CD8-positive, alpha-beta T cell (primary cell): ENCODE measurements at regions of chr3 and their contacts with region 1.

Region 1: GRCh38 chr3:9932843-9933560 is 632 bp upstream of the CRELD1 start:
- DNase-seq: peak; percentile 77 to 94 (median 87)
- ATAC-seq: peak; percentile 59
- H3K4me3 ChIP-seq: peak overlapping the region; percentile 85 to 95
- H3K4me3 Mint-ChIP-seq: peak overlapping the region; percentile 95
- H3K27ac ChIP-seq: peak overlapping the region; percentile 90 to 100
- H3K27ac Mint-ChIP-seq: peak overlapping the region; percentile 99
- H3K4me1 ChIP-seq: peaks cover 32% of the 10 kb centered on the region
- H3K4me1 Mint-ChIP-seq: peaks cover 47% of the 10 kb centered on the region
- H3K27me3 ChIP-seq: no peaks in the 10 kb centered on the region
- H3K27me3 Mint-ChIP-seq: no peaks in the 10 kb centered on the region
- CTCF ChIP-seq: peak; percentile 79

Region 2: GRCh38 chr3:9362731-9363530 is 570.1 kb before region 1 on chr3 and contains the start of gene THUMPD3:
- CTCF ChIA-PET with region 1: no interaction called
- POLR2A ChIA-PET with region 1: interaction called, 5 read pairs
- intact Hi-C with region 1: loop called in 1 of 2 experiments (anchors 5 kb)
- DNase-seq: peak; percentile 82 to 94 (median 92)
- ATAC-seq: peak; percentile 92
- H3K4me3 ChIP-seq: peak within 1 kb of the TSS; percentile 79 to 97
- H3K4me3 Mint-ChIP-seq: peak within 1 kb of the TSS; percentile 96
- H3K27ac ChIP-seq: peak within 1 kb of the TSS; percentile 93 to 97
- H3K27ac Mint-ChIP-seq: peak within 1 kb of the TSS; percentile 99
- H3K4me1 ChIP-seq: peaks cover 19% of the 10 kb centered on the region
- H3K4me1 Mint-ChIP-seq: peaks cover 35% of the 10 kb centered on the region
- H3K27me3 ChIP-seq: no peaks in the 10 kb centered on the region
- H3K27me3 Mint-ChIP-seq: no peaks in the 10 kb centered on the region
- CTCF ChIP-seq: no peak
- total RNA-seq, gene THUMPD3: 84.1 to 84.3 TPM

Region 3: DNA sequence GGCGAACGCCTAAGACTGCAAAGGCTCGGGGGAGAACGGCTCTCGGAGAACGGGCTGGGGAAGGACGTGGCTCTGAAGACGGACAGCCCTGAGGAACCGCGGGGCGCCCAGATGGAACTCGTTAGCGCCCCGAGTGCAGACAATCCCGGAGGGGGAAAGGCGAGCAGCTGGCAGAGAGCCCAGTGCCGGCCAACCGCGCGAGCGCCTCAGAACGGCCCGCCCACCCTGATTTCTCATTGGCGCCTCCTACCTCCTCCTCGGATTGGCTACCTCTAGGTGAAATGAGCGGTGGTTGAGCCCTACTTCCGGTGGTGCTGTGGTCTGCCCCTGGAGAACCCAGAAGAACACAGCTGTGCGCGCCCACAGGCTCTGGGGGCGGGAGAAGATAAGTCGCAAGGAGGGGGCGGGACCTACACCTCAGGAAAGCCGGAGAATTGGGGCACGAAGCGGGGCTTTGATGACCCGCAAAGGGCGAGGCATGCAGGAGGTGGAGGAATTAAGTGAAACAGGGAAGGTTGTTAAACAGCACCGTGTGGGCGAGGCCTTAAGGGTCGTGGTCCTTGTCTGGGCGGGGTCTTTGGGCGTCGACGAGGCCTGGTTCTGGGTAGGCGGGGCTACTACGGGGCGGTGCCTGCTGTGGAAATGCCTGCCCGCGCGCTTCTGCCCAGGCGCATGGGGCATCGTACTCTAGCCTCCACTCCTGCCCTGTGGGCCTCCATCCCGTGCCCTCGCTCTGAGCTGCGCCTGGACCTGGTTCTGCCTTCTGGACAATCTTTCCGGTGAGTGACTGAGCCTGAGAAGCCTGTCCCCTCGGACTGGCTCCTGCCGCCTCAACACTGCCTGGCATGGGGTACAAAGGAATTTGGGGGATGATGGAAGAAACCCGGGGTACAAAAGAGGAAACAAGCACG is 183.1 kb before region 1 on chr3 and contains the start of gene OGG1:
- CTCF ChIA-PET with region 1: no interaction called
- POLR2A ChIA-PET with region 1: interaction called, 6 read pairs
- intact Hi-C with region 1: loop called in 1 of 2 experiments (anchors 5 kb)
- DNase-seq: peak; percentile 84 to 98 (median 95)
- ATAC-seq: peak; percentile 93
- H3K4me3 ChIP-seq: peak within 1 kb of the TSS; percentile 79 to 94
- H3K4me3 Mint-ChIP-seq: peak within 1 kb of the TSS; percentile 96
- H3K27ac ChIP-seq: peak within 1 kb of the TSS; percentile 50 to 52
- H3K27ac Mint-ChIP-seq: peak within 1 kb of the TSS; percentile 93
- H3K4me1 ChIP-seq: peaks cover 35% of the 10 kb centered on the region
- H3K4me1 Mint-ChIP-seq: peaks cover 44% of the 10 kb centered on the region
- H3K27me3 ChIP-seq: no peaks in the 10 kb centered on the region
- H3K27me3 Mint-ChIP-seq: no peaks in the 10 kb centered on the region
- CTCF ChIP-seq: no peak
- total RNA-seq, gene OGG1: 4.9 to 7.9 TPM

Region 4: GRCh38 chr3:9866639-9867038 is 66.4 kb before region 1 on chr3:
- CTCF ChIA-PET with region 1: no interaction called
- POLR2A ChIA-PET with region 1: no interaction called
- intact Hi-C with region 1: no loop called
- DNase-seq: no peak
- ATAC-seq: no peak
- H3K4me3 ChIP-seq: no peak overlapping the region
- H3K4me3 Mint-ChIP-seq: no peak overlapping the region
- H3K27ac ChIP-seq: no peak overlapping the region
- H3K27ac Mint-ChIP-seq: no peak overlapping the region
- H3K4me1 ChIP-seq: no peaks in the 10 kb centered on the region
- H3K4me1 Mint-ChIP-seq: peaks cover 4% of the 10 kb centered on the region
- H3K27me3 ChIP-seq: peaks cover 0 to 8% of the 10 kb centered on the region in 2 experiments
- H3K27me3 Mint-ChIP-seq: peaks cover 10% of the 10 kb centered on the region
- CTCF ChIP-seq: no peak

Region 5: DNA sequence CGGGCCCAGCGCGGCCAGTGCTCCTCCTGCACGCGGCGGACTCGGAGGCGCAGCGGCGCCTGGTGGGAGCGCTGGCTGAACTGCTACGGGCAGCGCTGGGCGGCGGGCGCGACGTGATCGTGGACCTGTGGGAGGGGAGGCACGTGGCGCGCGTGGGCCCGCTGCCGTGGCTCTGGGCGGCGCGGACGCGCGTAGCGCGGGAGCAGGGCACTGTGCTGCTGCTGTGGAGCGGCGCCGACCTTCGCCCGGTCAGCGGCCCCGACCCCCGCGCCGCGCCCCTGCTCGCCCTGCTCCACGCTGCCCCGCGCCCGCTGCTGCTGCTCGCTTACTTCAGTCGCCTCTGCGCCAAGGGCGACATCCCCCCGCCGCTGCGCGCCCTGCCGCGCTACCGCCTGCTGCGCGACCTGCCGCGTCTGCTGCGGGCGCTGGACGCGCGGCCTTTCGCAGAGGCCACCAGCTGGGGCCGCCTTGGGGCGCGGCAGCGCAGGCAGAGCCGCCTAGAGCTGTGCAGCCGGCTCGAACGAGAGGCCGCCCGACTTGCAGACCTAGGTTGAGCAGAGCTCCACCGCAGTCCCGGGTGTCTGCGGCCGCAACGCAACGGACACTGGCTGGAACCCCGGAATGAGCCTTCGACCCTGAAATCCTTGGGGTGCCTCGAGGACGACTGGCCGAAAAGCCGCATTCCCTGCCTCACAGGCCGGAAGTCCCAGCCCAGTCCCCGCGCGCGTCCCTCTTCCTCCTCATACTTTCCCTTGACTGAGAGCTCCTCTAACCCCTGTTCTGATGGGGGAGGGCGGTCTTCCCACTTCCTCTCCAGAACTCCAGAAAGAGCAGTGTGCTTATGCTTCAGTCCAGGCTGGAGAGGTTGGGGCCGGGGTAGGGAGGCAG is 17.5 kb before region 1 on chr3:
- CTCF ChIA-PET with region 1: interaction called, 13 read pairs
- POLR2A ChIA-PET with region 1: interaction called, 16 read pairs
- intact Hi-C with region 1: loop called in 1 of 2 experiments (anchors 2 kb)
- DNase-seq: peak in 3 of 9 experiments; percentile 36 to 55 (median 53)
- ATAC-seq: peak; percentile 45
- H3K4me3 ChIP-seq: peak overlapping the region; percentile 54 to 56
- H3K4me3 Mint-ChIP-seq: peak overlapping the region; percentile 81
- H3K27ac ChIP-seq: no peak overlapping the region
- H3K27ac Mint-ChIP-seq: no peak overlapping the region
- H3K4me1 ChIP-seq: peaks cover 13% of the 10 kb centered on the region
- H3K4me1 Mint-ChIP-seq: peaks cover 16% of the 10 kb centered on the region
- H3K27me3 ChIP-seq: no peaks in the 10 kb centered on the region
- H3K27me3 Mint-ChIP-seq: peaks cover 16% of the 10 kb centered on the region
- CTCF ChIP-seq: no peak

Region 6: DNA sequence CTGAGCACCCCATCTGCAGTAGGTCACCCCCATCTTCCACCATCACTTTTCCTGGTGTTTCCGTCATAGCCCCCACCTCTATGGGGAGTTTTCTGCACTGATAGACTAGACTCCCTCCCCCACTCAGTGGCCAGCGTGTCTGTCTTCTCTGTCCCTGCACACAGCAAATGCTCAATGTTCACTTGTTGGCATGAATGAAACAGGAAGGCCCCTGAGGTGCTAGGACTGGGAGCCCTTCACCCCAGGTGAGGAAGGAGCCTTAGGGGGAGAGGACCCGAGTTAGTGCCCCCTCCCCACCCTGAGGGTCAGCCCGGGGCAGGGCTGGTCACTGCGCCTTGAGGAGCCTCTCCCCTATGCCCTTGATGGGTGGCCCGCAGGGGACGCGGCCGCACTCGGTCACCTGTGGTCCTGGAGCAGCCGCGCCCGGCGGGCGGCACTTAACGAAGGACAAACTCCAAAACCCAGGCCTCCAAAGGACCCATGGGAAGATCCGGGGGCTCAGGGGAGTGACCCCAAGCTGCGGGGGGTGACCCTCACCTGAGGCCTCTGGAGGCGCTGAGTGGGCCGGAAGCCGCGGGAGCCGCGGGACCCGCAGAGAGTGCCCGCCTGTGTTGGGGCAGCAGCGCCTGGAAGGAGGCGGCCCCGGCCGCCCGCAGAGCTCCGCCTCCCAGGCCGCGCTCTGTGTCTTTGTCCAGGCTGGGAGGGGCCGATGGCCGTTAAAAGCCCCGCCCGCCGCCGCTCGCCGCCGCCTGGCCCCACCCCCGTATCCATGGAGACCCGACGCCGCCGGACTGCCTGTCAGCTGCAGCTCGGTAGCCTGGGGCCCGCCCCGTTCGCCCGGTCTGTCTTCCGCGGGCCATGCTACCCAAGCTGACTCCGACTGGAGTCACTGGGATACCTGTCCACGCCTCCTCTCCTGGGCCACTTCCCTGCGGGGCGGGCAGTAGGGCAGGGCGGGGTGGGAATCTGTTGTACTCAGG is 77.8 kb after region 1 on chr3:
- CTCF ChIA-PET with region 1: interaction called, 3 read pairs
- POLR2A ChIA-PET with region 1: no interaction called
- intact Hi-C with region 1: loop called (anchors 1 to 5 kb)
- DNase-seq: peak; percentile 46 to 88 (median 75)
- ATAC-seq: peak; percentile 54
- H3K4me3 ChIP-seq: peak overlapping the region; percentile 50 to 55
- H3K4me3 Mint-ChIP-seq: peak overlapping the region; percentile 68
- H3K27ac ChIP-seq: no peak overlapping the region
- H3K27ac Mint-ChIP-seq: no peak overlapping the region
- H3K4me1 ChIP-seq: peaks cover 17% of the 10 kb centered on the region
- H3K4me1 Mint-ChIP-seq: peaks cover 18% of the 10 kb centered on the region
- H3K27me3 ChIP-seq: no peaks in the 10 kb centered on the region
- H3K27me3 Mint-ChIP-seq: peaks cover 7% of the 10 kb centered on the region
- CTCF ChIP-seq: no peak

Region 7: DNA sequence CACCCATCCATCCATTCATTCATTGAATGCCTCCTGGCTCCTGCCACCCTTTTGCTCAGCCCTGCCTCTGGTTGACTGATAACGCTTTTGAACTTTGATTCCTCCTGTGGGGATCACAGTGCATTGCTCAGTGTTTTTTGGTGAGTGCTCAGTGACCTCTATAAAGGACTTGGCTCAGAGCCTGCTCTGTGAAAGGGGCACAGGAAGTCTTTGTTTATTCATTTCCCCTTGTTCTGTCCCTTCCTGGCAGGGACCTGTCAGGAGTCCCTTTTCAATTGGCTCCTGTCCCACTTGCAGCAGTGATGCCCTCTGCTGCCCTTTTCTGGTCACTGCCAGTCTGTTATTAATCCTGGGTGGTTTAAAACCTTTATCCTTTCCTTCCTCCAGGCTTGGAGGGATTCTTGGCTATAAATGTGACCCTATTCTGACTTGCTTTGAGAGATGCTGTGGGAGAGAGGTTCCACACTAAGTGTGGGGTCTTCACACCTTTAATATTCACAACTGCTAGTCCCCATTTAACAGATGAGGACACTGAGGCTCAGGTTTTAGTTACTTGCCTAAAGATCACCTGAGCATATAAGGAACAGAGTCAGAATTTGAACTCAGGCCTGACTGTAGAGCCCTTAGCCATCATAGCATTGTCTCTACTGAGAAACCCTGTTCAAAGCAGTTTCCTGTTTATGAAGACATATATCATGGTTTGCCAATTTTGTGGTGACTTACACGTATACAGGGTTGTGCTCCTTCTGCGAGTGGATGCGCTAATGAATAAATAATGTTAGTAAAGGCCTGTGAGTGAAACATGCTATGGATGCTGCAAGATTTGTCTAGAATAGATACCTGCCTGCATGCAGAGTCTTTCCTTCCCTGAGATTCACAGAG is 292.0 kb after region 1 on chr3:
- CTCF ChIA-PET with region 1: no interaction called
- POLR2A ChIA-PET with region 1: interaction called, 7 read pairs
- intact Hi-C with region 1: loop called in 1 of 2 experiments (anchors 5 kb)
- DNase-seq: peak; percentile 34 to 81 (median 65)
- ATAC-seq: peak; percentile 70
- H3K4me3 ChIP-seq: no peak overlapping the region
- H3K4me3 Mint-ChIP-seq: peak overlapping the region; percentile 7
- H3K27ac ChIP-seq: peak overlapping the region in 1 of 2 experiments; percentile 30
- H3K27ac Mint-ChIP-seq: peak overlapping the region; percentile 75
- H3K4me1 ChIP-seq: peaks cover 24% of the 10 kb centered on the region
- H3K4me1 Mint-ChIP-seq: peaks cover 51% of the 10 kb centered on the region
- H3K27me3 ChIP-seq: no peaks in the 10 kb centered on the region
- H3K27me3 Mint-ChIP-seq: no peaks in the 10 kb centered on the region
- CTCF ChIP-seq: peak; percentile 86

Region 8: DNA sequence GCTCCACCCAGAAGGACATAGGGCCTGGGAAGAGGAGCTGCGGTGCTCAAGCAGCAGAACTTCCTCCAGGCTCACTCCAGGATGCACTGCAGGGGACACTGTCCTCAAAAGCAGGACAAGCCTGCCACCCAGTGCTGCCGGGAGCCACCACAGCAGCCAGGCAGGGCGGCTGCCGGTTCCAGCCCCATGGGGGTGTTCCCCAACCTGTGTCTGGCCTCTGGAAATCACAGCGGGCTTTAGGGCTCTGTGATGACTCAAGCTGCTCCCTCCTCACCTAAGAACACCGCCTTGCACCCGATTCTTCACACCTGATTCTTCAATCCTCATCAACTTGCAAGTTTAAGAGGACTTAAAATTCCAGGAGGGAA is 811.1 kb after region 1 on chr3:
- CTCF ChIA-PET with region 1: no interaction called
- POLR2A ChIA-PET with region 1: no interaction called
- intact Hi-C with region 1: loop called in 1 of 2 experiments (anchors 5 kb)
- DNase-seq: no peak
- ATAC-seq: peak; percentile 29
- H3K4me3 ChIP-seq: no peak overlapping the region
- H3K4me3 Mint-ChIP-seq: no peak overlapping the region
- H3K27ac ChIP-seq: no peak overlapping the region
- H3K27ac Mint-ChIP-seq: no peak overlapping the region
- H3K4me1 ChIP-seq: peaks cover 2% of the 10 kb centered on the region
- H3K4me1 Mint-ChIP-seq: peaks cover under 1% of the 10 kb centered on the region
- H3K27me3 ChIP-seq: peaks cover 0 to 2% of the 10 kb centered on the region in 2 experiments
- H3K27me3 Mint-ChIP-seq: peaks cover 23% of the 10 kb centered on the region
- CTCF ChIP-seq: no peak